GM10248 (cell line): ENCODE measurements at regions of chr11 and their contacts with region 1.

Region 1: GRCh38 chr11:128956401-128957201 is 13.9 kb upstream of the TP53AIP1 start:
- DNase-seq: peak; percentile 59
- CTCF ChIP-seq: peak; percentile 39

Region 2: DNA sequence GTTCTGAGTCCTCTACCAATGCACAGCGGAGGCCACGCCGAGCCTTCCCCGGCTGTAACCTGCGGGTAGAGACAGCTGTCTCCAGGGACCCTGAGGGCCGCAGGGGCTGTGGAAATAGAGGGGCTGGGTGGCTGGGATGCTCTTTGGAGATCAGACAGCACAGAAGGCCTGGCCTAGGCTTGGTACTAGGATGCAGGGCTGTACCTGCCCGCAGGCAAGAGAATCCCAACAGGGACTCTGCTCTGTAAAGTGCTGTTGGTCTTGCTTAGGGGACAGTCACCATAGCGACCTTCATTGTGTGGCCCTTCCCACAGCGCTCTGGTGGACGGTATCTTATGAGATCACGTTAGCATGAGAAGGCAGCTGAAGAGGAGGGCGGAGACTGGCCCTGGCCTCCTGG is 76.8 kb before region 1 on chr11:
- CTCF ChIA-PET with region 1: interaction called, 198 read pairs
- POLR2A ChIA-PET with region 1: no interaction called
- DNase-seq: no peak
- CTCF ChIP-seq: no peak